Natural killer cell (primary cell): ENCODE measurements at regions of chr7 and their contacts with region 1.

Region 1: DNA sequence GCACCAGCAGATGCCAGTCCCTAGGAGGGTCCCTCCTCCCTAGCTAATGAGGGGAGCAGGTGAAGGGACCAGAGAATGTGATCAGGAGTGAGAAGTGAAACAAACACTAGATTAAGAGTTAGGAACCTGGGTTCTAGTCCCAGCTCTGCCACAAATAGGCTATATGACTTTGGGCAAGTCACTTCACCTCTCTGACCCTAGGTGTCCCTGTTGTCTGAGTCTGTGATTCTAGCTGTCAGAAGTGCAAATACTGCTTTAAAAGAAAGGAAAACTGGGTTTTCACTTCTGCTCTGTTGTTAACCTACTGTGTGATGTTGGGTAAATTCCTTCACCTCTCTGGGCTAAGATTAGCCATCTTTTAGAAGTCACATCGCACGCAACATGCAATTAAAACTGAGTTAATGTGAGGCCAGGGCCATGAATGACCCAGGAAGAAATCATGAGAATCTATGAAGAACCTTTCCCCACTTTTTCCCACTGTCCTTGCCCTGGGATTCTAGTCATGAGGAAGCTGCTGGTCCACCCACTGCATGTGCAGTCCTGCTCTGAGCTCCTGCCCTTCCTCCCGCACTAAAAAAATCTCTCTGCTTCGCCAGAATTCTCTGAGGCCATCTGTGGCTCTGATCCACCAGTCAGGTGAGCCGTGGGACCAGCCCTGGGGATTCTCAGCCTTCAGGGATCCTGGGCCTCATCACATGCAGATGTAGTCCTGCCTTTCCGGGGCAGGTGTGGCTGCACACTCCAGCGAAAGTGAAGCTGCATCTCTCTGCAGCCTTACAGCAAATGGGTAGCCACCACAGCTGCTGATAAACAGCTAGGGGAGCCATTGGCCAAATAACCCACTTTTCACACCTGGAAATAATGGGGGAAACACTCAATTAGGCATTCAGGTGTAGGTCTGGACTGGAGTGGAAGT is 181.7 kb downstream of the PLXNA4 start:
- DNase-seq: peak; percentile 21 to 75
- ATAC-seq: peak; percentile 74 to 95 (median 94)
- H3K4me3 ChIP-seq: no peak overlapping the region
- H3K4me3 Mint-ChIP-seq: peak overlapping the region; percentile 32
- H3K27ac ChIP-seq: no peak overlapping the region
- H3K27ac Mint-ChIP-seq: peak overlapping the region in 1 of 2 donors; percentile 13
- H3K4me1 ChIP-seq: peaks cover 16% of the 10 kb centered on the region
- H3K4me1 Mint-ChIP-seq: peaks cover 28 to 33% of the 10 kb centered on the region in 2 donors
- H3K27me3 ChIP-seq: no peaks in the 10 kb centered on the region
- H3K27me3 Mint-ChIP-seq: peaks cover 9 to 11% of the 10 kb centered on the region in 2 donors
- CTCF ChIP-seq: peak; percentile 79

Region 2: DNA sequence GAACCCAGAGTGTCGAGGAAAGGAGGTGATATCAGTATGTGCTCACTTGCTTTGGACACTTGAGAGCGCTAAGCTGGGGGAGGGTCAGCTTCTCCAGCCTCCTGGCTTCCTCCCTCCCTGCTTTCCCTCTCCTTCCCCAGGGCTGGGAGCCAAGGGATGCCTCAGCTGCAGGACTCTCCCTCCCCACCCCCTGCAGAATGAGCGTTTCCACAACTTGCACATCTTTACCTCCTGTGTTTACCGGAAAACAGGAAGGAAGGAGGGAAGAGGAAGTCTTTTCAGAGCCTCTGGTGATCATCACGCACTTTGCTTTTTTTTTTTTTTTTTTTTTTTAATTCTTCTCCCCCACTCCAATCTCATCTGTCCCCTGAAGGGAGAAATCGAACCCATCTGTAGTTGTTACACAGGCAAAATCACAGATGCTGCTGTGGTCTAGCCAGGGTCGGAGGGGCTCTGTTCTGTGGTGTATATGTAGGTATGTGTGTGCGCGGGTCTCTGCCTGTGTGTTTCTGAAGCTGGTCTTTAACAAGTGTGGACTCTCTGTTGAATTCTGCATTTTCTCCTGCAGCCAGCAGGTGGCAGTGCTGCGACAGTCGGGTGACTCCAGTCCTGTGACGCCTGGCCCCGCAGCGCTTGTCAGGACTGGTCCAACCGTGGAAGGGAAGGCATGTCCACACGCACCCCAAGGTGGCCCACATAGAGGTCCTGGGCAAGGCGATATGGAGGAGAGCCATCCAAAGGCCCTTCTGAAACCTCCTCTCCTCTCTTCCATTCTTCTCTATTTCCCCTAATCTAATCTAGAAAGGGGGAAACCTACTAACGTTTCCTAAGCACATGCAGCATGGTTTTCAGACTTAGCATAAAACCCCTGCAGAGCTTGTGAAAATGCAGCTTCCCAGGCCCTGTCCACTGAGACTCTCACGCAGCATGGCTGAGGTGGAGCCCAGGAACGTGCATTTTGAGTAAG is 75.9 kb before region 1 on chr7:
- intact Hi-C with region 1: loop called (anchors 1 kb)
- DNase-seq: peak; percentile 76 to 89
- ATAC-seq: peak; percentile 86 to 99 (median 98)
- H3K4me3 ChIP-seq: no peak overlapping the region
- H3K4me3 Mint-ChIP-seq: no peak overlapping the region
- H3K27ac ChIP-seq: no peak overlapping the region
- H3K27ac Mint-ChIP-seq: no peak overlapping the region
- H3K4me1 ChIP-seq: peaks cover 9% of the 10 kb centered on the region
- H3K4me1 Mint-ChIP-seq: peaks cover 14 to 17% of the 10 kb centered on the region in 2 donors
- H3K27me3 ChIP-seq: peaks cover 4% of the 10 kb centered on the region
- H3K27me3 Mint-ChIP-seq: peaks cover 36 to 38% of the 10 kb centered on the region in 2 donors
- CTCF ChIP-seq: peak; percentile 94

Region 3: GRCh38 chr7:132580717-132581285 is 186.3 kb after region 1 on chr7:
- intact Hi-C with region 1: loop called (anchors 1 kb)
- DNase-seq: peak; percentile 70 to 87
- ATAC-seq: peak; percentile 74 to 80 (median 80)
- H3K4me3 ChIP-seq: no peak overlapping the region
- H3K4me3 Mint-ChIP-seq: no peak overlapping the region
- H3K27ac ChIP-seq: no peak overlapping the region
- H3K27ac Mint-ChIP-seq: no peak overlapping the region
- H3K4me1 ChIP-seq: peaks cover 19% of the 10 kb centered on the region
- H3K4me1 Mint-ChIP-seq: peaks cover 2 to 18% of the 10 kb centered on the region in 2 donors
- H3K27me3 ChIP-seq: peaks cover 18% of the 10 kb centered on the region
- H3K27me3 Mint-ChIP-seq: peaks cover 14 to 27% of the 10 kb centered on the region in 2 donors
- CTCF ChIP-seq: peak; percentile 86